MCF 10A (cell line): ENCODE measurements at regions of chr10 and their contacts with region 1.

Region 1: DNA sequence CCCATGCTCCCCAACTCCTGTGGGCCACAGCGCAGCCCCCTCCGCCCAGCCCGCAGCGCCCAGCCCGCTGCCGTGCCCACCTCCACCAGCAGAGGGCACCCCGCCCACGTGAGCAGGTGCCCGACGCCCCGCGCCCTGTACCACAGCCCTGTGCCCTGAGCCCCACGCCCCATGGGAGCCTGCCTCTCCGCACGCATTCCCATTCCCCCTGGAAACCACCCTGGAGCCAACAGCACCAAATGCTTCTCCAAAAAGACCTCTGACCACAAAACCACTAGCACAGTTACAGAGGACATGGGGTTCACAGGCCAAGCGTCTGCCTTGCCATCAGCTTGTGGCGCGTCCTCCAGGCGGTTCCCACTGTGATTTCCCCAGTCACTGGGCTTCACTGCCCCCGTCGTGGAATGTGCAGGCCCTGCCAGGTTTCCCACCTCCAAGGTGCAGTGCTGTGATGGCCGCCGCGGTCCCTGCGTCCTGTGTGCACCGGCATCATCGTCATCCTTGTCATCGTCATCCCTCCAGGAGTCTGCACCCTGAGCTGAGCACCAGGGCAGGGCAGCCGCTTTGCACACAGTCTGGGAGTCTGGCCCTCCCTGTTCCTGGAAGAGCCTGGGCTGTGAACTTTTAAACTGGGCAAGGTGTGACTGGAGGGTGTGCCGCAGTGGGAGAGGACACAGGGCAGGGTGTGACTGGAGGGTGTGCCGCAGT is 61.7 kb downstream of the PWWP2B start:
- DNase-seq: peak; percentile 45
- H3K4me3 Mint-ChIP-seq: no peak overlapping the region
- H3K27ac Mint-ChIP-seq: no peak overlapping the region
- H3K4me1 Mint-ChIP-seq: peaks cover 7% of the 10 kb centered on the region
- H3K27me3 Mint-ChIP-seq: no peaks in the 10 kb centered on the region
- CTCF ChIP-seq: peak; percentile 98

Region 2: GRCh38 chr10:132477398-132478340 is 18.9 kb after region 1 on chr10:
- CTCF ChIA-PET with region 1: interaction called, 11 read pairs
- POLR2A ChIA-PET with region 1: no interaction called
- intact Hi-C with region 1: no loop called
- DNase-seq: no peak
- H3K4me3 Mint-ChIP-seq: no peak overlapping the region
- H3K27ac Mint-ChIP-seq: no peak overlapping the region
- H3K4me1 Mint-ChIP-seq: peaks cover 25% of the 10 kb centered on the region
- H3K27me3 Mint-ChIP-seq: no peaks in the 10 kb centered on the region
- CTCF ChIP-seq: no peak

Region 3: GRCh38 chr10:132536971-132537712 is 78.4 kb after region 1 on chr10:
- CTCF ChIA-PET with region 1: interaction called, 8 read pairs
- POLR2A ChIA-PET with region 1: no interaction called
- intact Hi-C with region 1: loop called (anchors 2 kb)
- DNase-seq: peak; percentile 98
- H3K4me3 Mint-ChIP-seq: peak overlapping the region; percentile 73
- H3K27ac Mint-ChIP-seq: no peak overlapping the region
- H3K4me1 Mint-ChIP-seq: peaks cover 58% of the 10 kb centered on the region
- H3K27me3 Mint-ChIP-seq: no peaks in the 10 kb centered on the region
- CTCF ChIP-seq: no peak

Region 4: GRCh38 chr10:132577350-132578003 is 118.7 kb after region 1 on chr10:
- CTCF ChIA-PET with region 1: interaction called, 3 read pairs
- POLR2A ChIA-PET with region 1: interaction called, 3 read pairs
- intact Hi-C with region 1: loop called (anchors 1 kb)
- DNase-seq: peak; percentile 20
- H3K4me3 Mint-ChIP-seq: no peak overlapping the region
- H3K27ac Mint-ChIP-seq: no peak overlapping the region
- H3K4me1 Mint-ChIP-seq: peaks cover 6% of the 10 kb centered on the region
- H3K27me3 Mint-ChIP-seq: no peaks in the 10 kb centered on the region
- CTCF ChIP-seq: peak; percentile 36

Region 5: DNA sequence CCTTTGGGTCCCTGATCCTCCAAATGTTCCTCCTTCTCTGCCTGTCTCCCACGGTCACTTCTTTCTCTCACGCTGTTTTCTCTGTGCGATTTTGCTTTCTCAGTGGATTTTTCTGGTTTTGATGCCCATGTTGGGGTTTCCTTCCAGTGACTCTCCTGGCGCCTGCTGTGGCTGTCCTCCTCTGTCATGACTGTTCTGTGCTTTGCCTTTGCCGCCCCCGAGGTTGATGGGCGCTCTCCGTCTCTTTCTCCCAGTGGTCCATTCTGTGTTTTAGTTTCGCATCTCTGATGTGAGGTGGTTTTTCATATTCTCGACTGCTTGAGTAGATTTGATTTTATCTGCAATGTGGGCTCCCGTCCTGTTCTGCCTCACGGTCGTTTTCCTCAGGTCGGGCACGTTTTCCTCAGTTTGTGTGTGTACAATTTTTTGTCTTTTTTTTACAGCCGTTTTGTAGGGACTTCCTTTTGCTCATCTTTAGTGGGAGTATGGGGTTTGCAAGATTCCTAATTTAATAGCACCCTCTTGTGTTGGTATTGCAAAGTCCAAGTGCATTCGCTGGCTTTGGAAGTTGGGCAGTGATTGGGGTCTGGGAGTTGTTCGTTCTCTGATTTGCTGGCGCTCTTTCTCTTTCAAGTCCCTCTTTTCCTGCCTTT is 178.9 kb after region 1 on chr10:
- CTCF ChIA-PET with region 1: interaction called, 65 read pairs
- POLR2A ChIA-PET with region 1: no interaction called
- intact Hi-C with region 1: loop called (anchors 1 kb)
- DNase-seq: peak; percentile 63
- H3K4me3 Mint-ChIP-seq: no peak overlapping the region
- H3K27ac Mint-ChIP-seq: peak overlapping the region; percentile 36
- H3K4me1 Mint-ChIP-seq: peaks cover 24% of the 10 kb centered on the region
- H3K27me3 Mint-ChIP-seq: no peaks in the 10 kb centered on the region
- CTCF ChIP-seq: peak; percentile 75

Region 6: GRCh38 chr10:132643709-132644526 is 185.2 kb after region 1 on chr10:
- CTCF ChIA-PET with region 1: interaction called, 21 read pairs
- POLR2A ChIA-PET with region 1: no interaction called
- intact Hi-C with region 1: no loop called
- DNase-seq: no peak
- H3K4me3 Mint-ChIP-seq: no peak overlapping the region
- H3K27ac Mint-ChIP-seq: no peak overlapping the region
- H3K4me1 Mint-ChIP-seq: no peaks in the 10 kb centered on the region
- H3K27me3 Mint-ChIP-seq: no peaks in the 10 kb centered on the region
- CTCF ChIP-seq: no peak